Psoas muscle (tissue), 8 donors: ENCODE measurements at regions of chr5 and their contacts with region 1.

Region 1: DNA sequence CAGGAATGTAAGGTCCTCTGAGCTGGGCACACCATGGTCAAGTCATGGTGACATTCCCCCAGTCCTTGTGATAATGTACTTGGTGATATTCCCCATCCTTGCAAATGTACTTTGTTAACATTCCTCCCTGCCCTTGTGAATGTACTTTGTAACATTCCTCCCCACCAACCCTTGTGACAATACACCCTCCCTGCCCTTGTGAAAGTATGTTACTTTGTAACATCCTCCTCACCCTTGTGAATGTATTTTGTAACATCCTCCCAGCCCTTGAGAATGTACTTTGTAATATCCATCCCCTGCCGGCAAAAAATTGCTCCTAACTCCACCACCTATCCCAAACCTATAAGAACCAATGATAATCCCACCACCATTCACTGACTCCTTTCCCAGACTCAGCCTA is 53.3 kb downstream of the RAPGEF6 start:
- DNase-seq: no peak
- ATAC-seq: no peak
- H3K4me3 ChIP-seq: no peak overlapping the region
- H3K27ac ChIP-seq: no peak overlapping the region
- H3K4me1 ChIP-seq: no peaks in the 10 kb centered on the region
- H3K27me3 ChIP-seq: no peaks in the 10 kb centered on the region
- CTCF ChIP-seq: no peak

Region 2: GRCh38 chr5:131538177-131538593 is 43.5 kb before region 1 on chr5:
- intact Hi-C with region 1: loop called in 1 of 2 experiments (anchors 1 kb)
- DNase-seq: no peak
- ATAC-seq: peak in 1 of 4 donors; percentile 33
- H3K4me3 ChIP-seq: no peak overlapping the region
- H3K27ac ChIP-seq: no peak overlapping the region
- H3K4me1 ChIP-seq: peaks cover 6% of the 10 kb centered on the region
- H3K27me3 ChIP-seq: no peaks in the 10 kb centered on the region
- CTCF ChIP-seq: no peak